ENCODE measurements at regions of chr4 and their contacts with region 1.

Region 1: DNA sequence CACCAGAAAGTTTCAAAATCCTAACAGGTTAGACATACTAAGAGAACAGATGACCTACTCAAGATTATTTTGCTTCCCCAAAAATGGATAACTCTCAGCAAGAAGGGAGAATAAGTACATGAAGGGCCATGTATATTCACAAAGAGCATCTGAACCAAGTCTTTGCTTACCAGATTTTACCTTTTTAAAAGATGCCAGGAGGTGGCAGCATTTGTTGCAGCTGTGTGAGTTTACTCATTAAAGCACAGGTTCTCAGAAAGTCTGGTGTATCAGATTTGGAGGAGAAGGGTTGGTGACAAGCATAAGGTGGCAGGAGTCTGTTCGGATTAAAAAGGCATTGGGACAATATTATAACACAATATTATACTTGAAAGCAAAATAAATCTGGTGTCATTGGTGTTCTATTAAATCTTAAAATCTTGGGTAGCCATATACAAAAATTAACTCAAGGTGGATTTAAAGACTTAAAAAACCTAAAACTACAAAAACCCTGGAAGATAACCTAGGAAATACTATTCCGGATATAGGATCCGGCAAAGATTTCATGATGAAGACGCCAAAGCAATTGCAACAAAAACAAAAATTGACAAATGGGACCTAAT is 51.3 kb upstream of the NFKB1 start:
- DNase-seq: peak; percentile 18
- ATAC-seq: peak; percentile 80
- H3K4me3 Mint-ChIP-seq: no peak overlapping the region
- H3K27ac Mint-ChIP-seq: no peak overlapping the region
- H3K4me1 Mint-ChIP-seq: peaks cover 22% of the 10 kb centered on the region
- H3K27me3 Mint-ChIP-seq: no peaks in the 10 kb centered on the region
- CTCF ChIP-seq: no peak

Region 2: DNA sequence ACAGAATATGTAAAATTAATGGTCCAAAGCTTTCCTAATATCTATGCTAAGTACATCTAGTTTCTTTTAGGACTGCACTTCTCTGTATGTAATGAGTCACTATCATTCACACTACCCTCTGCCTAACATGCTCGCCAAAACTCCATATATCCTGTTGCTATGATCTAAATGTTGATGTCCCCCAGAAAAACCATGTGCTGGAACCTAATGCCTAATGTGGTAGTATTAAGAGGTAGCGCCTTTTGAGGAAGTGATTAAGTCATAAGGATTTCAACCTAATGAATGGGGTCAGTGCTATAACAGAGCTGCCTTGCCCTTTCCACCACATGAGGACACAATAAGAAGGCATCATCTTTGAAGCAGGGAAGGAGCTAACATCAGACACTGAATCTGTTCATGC is 16.4 kb after region 1 on chr4:
- CTCF ChIA-PET with region 1: no interaction called
- POLR2A ChIA-PET with region 1: no interaction called
- DNase-seq: no peak
- ATAC-seq: no peak
- H3K4me3 Mint-ChIP-seq: no peak overlapping the region
- H3K27ac Mint-ChIP-seq: no peak overlapping the region
- H3K4me1 Mint-ChIP-seq: no peaks in the 10 kb centered on the region
- H3K27me3 Mint-ChIP-seq: no peaks in the 10 kb centered on the region; the same call in 1 of the 2 replicates
- CTCF ChIP-seq: no peak

Region 3: DNA sequence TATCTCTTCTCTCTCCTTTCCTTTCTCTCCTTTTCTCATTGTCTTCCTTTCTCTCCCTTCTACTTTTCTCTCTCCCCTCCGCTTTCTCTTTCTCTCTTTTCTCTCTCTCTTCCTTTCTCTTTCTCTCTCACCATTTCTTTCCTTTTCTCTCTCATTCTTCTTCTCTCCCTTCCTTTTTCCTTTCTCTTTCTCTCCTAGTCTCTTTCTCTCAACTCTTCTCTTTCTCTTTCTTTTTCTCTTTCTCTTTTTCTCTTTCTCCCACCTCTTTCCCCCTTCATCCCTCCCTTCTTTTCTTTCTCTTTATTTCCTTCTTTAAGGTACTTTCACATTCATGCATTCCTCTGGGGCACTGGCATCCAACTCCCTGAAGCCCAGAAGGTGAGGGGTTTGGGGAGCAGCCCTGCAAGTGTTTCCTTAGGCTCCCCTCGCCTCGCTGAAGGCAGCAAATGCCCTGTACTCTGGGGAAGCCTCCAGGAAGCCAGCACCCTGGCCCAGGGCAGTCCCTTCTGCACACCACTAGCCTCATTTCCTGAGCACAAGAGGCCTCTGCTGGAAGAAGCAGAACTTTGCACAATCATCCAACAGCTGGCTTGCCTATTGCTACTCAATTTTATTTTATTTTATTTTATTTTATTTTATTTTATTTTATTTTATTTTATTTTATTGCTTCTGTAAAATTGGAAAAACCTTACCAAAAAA is 175.5 kb after region 1 on chr4:
- CTCF ChIA-PET with region 1: interaction called, 19 read pairs
- POLR2A ChIA-PET with region 1: no interaction called
- DNase-seq: peak; percentile 46
- ATAC-seq: peak; percentile 85
- H3K4me3 Mint-ChIP-seq: no peak overlapping the region
- H3K27ac Mint-ChIP-seq: no peak overlapping the region
- H3K4me1 Mint-ChIP-seq: peaks cover 20% of the 10 kb centered on the region
- H3K27me3 Mint-ChIP-seq: no peaks in the 10 kb centered on the region
- CTCF ChIP-seq: no peak

Measured in WTC11 (cell line).